Activated B cell treated with CpG ODN at 0.5 μM for 24 hours (primary cell): ENCODE measurements at regions of chr6 and their contacts with region 1.

Region 1: DNA sequence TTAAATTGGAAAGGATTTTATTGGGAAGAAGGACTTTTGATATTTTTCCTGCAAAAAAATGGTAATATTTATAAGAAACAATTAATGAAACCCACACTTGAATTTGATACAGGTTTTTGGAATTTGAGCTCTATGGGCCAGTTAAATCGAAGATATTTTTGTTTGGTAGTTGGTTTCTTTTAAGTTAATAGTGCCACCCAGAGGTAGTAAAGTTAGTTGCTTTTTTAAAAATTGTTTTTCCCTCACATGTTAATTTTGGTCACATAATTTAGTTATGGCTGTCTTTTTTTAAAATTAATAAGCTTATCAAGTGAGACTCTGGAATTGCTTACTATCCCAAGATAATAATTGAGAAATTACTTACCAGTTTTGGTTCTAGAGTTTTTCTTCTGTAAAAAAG is 7.1 kb downstream of the PRIM2 start:
- DNase-seq: no peak
- ATAC-seq: no peak
- H3K4me3 Mint-ChIP-seq: no peak overlapping the region
- H3K27ac Mint-ChIP-seq: no peak overlapping the region
- H3K4me1 Mint-ChIP-seq: peaks cover under 1% of the 10 kb centered on the region
- H3K27me3 Mint-ChIP-seq: no peaks in the 10 kb centered on the region
- CTCF ChIP-seq: no peak

Region 2: DNA sequence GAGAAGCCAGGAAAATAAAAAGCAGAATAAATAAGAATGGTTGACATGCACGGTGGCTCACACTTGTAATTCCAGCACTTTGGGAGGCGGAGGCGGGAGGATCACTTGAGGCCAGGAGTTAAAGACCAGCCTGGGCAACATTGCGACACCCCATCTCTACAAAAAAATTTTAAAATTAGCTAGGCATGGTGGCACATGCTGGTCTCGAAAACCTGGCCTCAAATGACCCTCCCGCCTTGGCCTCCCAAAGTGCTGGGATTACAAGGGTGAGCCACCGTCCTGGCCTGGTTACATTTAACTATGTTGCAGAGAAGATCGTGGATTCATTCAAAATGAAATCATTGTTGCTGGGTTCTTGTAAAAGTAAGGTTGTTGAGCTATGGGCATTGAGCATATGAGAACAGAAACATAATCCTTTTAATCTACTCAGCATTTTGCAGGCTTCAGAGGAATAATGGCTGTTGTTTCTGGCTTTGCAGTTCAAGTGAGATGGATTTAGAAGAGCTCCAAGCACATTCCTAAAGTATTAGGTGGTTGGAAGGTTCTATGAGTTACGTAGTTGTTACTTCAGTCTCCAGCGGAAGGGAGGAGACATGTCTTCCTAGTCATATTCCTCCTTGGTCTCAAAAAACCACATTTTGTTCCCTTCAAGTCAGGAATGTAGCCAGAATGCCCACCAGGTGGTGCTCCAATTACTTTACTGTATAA is 56.8 kb before region 1 on chr6:
- CTCF ChIA-PET with region 1: no interaction called
- POLR2A ChIA-PET with region 1: no interaction called
- intact Hi-C with region 1: loop called (anchors 1 kb)
- DNase-seq: no peak
- ATAC-seq: no peak
- H3K4me3 Mint-ChIP-seq: no peak overlapping the region
- H3K27ac Mint-ChIP-seq: no peak overlapping the region
- H3K4me1 Mint-ChIP-seq: no peaks in the 10 kb centered on the region
- H3K27me3 Mint-ChIP-seq: peaks cover 9% of the 10 kb centered on the region
- CTCF ChIP-seq: no peak

Region 3: GRCh38 chr6:57305761-57306160 is 18.8 kb before region 1 on chr6:
- CTCF ChIA-PET with region 1: no interaction called
- POLR2A ChIA-PET with region 1: no interaction called
- intact Hi-C with region 1: no loop called
- DNase-seq: no peak
- ATAC-seq: no peak
- H3K4me3 Mint-ChIP-seq: no peak overlapping the region
- H3K27ac Mint-ChIP-seq: no peak overlapping the region
- H3K4me1 Mint-ChIP-seq: no peaks in the 10 kb centered on the region
- H3K27me3 Mint-ChIP-seq: peaks cover 20% of the 10 kb centered on the region
- CTCF ChIP-seq: no peak